Mammary epithelial cell (primary cell): ENCODE measurements at regions of chr4 and their contacts with region 1.

Region 1: GRCh38 chr4:95165926-95166524 is 382.7 kb downstream of the UNC5C start:
- DNase-seq: peak; percentile 54
- H3K4me3 ChIP-seq: no peak overlapping the region
- H3K27ac ChIP-seq: no peak overlapping the region
- H3K4me1 ChIP-seq: no peaks in the 10 kb centered on the region
- H3K27me3 ChIP-seq: no peaks in the 10 kb centered on the region
- CTCF ChIP-seq: peak; percentile 39 to 65

Region 2: GRCh38 chr4:95510145-95510544 is 344.1 kb after region 1 on chr4:
- CTCF ChIA-PET with region 1: no interaction called
- dilution Hi-C with region 1: no loop called
- in situ Hi-C with region 1: no loop called
- intact Hi-C with region 1: loop called (anchors 2 kb)
- DNase-seq: peak; percentile 22
- H3K4me3 ChIP-seq: peak overlapping the region in 1 of 3 experiments; percentile 20
- H3K27ac ChIP-seq: peak overlapping the region; percentile 4
- H3K4me1 ChIP-seq: peaks cover 39% of the 10 kb centered on the region
- H3K27me3 ChIP-seq: no peaks in the 10 kb centered on the region
- CTCF ChIP-seq: peak; percentile 70 to 75

Region 3: GRCh38 chr4:95693594-95693993 is 527.6 kb after region 1 on chr4:
- CTCF ChIA-PET with region 1: no interaction called
- dilution Hi-C with region 1: no loop called
- in situ Hi-C with region 1: no loop called
- intact Hi-C with region 1: loop called (anchors 5 kb)
- DNase-seq: peak; percentile 48
- H3K4me3 ChIP-seq: no peak overlapping the region
- H3K27ac ChIP-seq: no peak overlapping the region
- H3K4me1 ChIP-seq: peaks cover 4% of the 10 kb centered on the region
- H3K27me3 ChIP-seq: no peaks in the 10 kb centered on the region
- CTCF ChIP-seq: peak; percentile 60 to 67

Region 4: GRCh38 chr4:96126204-96126603 is 960.2 kb after region 1 on chr4:
- CTCF ChIA-PET with region 1: no interaction called
- dilution Hi-C with region 1: no loop called
- in situ Hi-C with region 1: no loop called
- intact Hi-C with region 1: loop called (anchors 5 kb)
- DNase-seq: no peak
- H3K4me3 ChIP-seq: no peak overlapping the region
- H3K27ac ChIP-seq: no peak overlapping the region
- H3K4me1 ChIP-seq: no peaks in the 10 kb centered on the region
- H3K27me3 ChIP-seq: no peaks in the 10 kb centered on the region
- CTCF ChIP-seq: no peak

Region 5: GRCh38 chr4:97153042-97153441 is 1987.0 kb after region 1 on chr4:
- CTCF ChIA-PET with region 1: no interaction called
- dilution Hi-C with region 1: no loop called
- in situ Hi-C with region 1: no loop called
- intact Hi-C with region 1: loop called (anchors 5 kb)
- DNase-seq: peak; percentile 7
- H3K4me3 ChIP-seq: no peak overlapping the region
- H3K27ac ChIP-seq: no peak overlapping the region
- H3K4me1 ChIP-seq: no peaks in the 10 kb centered on the region
- H3K27me3 ChIP-seq: no peaks in the 10 kb centered on the region
- CTCF ChIP-seq: peak; percentile 14 to 46